B cell (primary cell): ENCODE measurements at regions of chr7 and their contacts with region 1.

Region 1: DNA sequence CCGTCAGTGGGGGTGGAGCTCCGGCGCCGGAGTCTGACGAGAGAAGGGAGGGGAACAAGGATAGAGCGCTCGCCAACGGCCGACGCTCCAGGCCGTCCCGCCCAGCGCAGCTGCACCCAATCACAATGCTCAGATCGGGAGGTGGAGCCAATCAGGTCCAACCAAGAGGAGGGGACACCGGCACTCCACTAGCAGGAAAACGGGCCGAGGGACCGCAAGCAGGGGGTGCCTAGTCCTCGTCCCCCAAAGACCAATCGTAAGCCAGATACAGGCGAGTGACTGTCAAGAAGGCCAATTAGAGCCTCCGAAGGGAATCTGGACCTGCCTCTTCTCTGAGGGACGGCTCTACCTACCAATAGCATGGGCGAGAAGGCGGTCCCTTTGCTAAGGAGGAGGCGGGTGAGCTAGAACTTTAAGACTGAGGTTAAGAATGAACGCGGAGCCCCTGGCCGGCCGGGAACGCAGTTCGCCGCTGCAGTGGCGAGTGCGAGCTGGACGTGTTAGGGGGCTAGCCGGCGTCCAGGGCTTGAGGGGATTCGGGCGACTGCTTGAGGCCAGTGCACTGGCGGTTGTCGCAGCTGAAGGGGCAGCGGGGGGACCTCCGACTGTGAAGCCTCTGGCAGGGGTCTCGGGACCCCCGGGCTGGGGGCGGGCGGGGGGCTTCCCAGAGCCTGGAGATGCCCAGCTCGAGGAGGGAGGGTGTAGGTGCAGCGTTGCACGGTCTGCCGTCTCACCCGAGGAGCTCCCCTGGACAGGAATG is at the start of gene FBXO24:
- DNase-seq: peak; percentile 100
- ATAC-seq: peak; percentile 79
- H3K4me3 ChIP-seq: peak within 1 kb of the TSS; percentile 82 to 93 (median 85)
- H3K4me3 Mint-ChIP-seq: peak within 1 kb of the TSS; percentile 98
- H3K27ac ChIP-seq: peak within 1 kb of the TSS; percentile 94 to 97
- H3K27ac Mint-ChIP-seq: peak within 1 kb of the TSS; percentile 99
- H3K4me1 ChIP-seq: peaks cover 27 to 38% of the 10 kb centered on the region in 2 donors
- H3K4me1 Mint-ChIP-seq: peaks cover 44% of the 10 kb centered on the region
- H3K27me3 ChIP-seq: peaks cover 0 to 14% (median 5%) of the 10 kb centered on the region in 4 experiments
- H3K27me3 Mint-ChIP-seq: peaks cover 9% of the 10 kb centered on the region
- CTCF ChIP-seq: no peak
- total RNA-seq, gene FBXO24: 1.6 and 2.2 TPM in 2 replicates

Region 2: DNA sequence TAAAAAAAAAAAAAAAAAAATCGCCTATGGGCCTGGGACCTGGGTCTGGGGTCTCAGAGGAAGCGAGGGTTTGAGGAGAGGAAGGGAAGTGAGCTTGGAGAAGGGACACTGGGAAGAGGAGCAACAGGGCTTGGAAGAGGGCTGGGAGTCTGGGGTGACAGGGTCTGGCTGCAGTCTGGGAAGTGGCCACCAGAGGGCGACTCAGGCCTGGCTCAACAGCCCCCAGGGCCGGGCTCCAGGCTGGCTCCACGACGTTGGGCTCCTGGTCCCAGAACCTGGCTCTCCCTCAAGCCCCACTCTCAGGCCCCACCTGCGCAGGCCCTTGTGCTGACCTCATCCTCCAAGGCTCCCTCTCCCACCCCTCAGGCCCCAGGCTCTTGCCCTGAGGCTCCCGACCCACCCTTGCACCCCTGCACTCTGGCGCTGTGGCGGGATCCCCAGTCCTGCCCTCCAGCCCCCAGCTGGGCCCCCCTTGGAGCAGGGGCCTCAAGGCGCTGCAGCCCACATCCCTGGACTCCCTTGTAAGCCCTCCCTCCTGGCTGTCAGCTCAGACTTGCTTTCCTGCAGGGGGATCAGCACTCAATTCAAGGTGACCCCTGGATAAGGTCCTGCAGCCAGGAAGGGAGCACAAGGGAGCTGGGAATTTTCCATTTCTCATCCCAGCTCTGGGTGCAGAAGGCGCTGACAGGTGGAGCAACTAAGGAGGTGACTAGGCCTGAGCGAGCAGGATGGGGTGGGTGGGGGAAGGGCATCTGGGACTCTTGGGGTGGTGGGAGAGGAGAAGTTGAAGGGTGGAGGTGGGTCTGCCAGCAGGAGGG is 117.0 kb before region 1 on chr7:
- CTCF ChIA-PET with region 1: interaction called, 13 read pairs
- POLR2A ChIA-PET with region 1: no interaction called
- intact Hi-C with region 1: no loop called
- DNase-seq: peak; percentile 84
- ATAC-seq: peak; percentile 90
- H3K4me3 ChIP-seq: no peak overlapping the region
- H3K4me3 Mint-ChIP-seq: no peak overlapping the region
- H3K27ac ChIP-seq: no peak overlapping the region
- H3K27ac Mint-ChIP-seq: peak overlapping the region; percentile 53
- H3K4me1 ChIP-seq: peaks cover 9 to 21% of the 10 kb centered on the region in 2 donors
- H3K4me1 Mint-ChIP-seq: peaks cover 24% of the 10 kb centered on the region
- H3K27me3 ChIP-seq: no peaks in the 10 kb centered on the region
- H3K27me3 Mint-ChIP-seq: no peaks in the 10 kb centered on the region
- CTCF ChIP-seq: peak; percentile 87

Region 3: DNA sequence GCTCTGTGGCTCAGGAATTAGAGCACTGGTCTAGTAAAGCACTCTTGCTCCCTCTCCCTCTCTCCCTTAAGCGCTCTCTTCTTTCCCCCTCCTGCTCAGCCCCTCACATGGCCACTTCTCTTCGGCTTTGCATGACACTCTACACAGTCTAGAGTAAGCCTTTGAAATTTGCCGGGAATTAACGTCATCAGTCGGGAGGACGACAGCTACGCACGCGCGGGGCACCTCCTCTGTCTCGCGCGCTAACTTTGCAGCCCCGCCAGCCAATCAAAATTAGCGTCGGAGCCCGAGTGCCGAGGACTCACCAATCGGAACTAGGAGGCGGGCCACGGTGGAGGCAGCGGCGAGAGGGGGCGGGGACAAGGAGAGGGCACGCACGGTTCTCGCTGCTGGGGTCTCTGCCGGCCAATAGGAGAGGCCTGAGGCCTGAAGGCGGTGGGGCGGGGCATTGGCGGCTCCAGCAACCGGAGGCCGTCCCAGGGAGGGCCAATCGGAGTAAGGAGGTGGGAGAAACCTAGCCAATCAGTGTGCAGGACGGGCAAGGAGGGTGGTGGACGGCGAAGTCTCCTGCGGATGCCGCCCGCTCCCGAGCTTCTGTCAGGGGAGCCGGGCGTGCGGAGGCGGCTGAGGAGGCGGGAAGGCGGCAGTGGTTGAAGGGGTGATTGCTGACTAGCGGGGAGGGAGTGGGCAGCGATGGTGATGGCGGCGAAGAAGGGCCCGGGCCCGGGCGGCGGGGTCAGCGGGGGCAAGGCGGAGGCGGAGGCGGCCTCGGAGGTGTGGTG is 47.6 kb before region 1 on chr7 and contains the start of gene AGFG2:
- CTCF ChIA-PET with region 1: interaction called, 5 read pairs
- POLR2A ChIA-PET with region 1: interaction called, 9 read pairs
- intact Hi-C with region 1: loop called (anchors 1 kb)
- DNase-seq: peak; percentile 100
- ATAC-seq: peak; percentile 97
- H3K4me3 ChIP-seq: peak within 1 kb of the TSS; percentile 62 to 84 (median 72)
- H3K4me3 Mint-ChIP-seq: peak within 1 kb of the TSS; percentile 91
- H3K27ac ChIP-seq: peak within 1 kb of the TSS in 1 of 2 donors; percentile 42
- H3K27ac Mint-ChIP-seq: peak within 1 kb of the TSS; percentile 76
- H3K4me1 ChIP-seq: peaks cover 14 to 23% of the 10 kb centered on the region in 2 donors
- H3K4me1 Mint-ChIP-seq: peaks cover 36% of the 10 kb centered on the region
- H3K27me3 ChIP-seq: no peaks in the 10 kb centered on the region
- H3K27me3 Mint-ChIP-seq: no peaks in the 10 kb centered on the region
- CTCF ChIP-seq: no peak
- total RNA-seq, gene AGFG2: 11.0 and 11.6 TPM in 2 replicates

Region 4: DNA sequence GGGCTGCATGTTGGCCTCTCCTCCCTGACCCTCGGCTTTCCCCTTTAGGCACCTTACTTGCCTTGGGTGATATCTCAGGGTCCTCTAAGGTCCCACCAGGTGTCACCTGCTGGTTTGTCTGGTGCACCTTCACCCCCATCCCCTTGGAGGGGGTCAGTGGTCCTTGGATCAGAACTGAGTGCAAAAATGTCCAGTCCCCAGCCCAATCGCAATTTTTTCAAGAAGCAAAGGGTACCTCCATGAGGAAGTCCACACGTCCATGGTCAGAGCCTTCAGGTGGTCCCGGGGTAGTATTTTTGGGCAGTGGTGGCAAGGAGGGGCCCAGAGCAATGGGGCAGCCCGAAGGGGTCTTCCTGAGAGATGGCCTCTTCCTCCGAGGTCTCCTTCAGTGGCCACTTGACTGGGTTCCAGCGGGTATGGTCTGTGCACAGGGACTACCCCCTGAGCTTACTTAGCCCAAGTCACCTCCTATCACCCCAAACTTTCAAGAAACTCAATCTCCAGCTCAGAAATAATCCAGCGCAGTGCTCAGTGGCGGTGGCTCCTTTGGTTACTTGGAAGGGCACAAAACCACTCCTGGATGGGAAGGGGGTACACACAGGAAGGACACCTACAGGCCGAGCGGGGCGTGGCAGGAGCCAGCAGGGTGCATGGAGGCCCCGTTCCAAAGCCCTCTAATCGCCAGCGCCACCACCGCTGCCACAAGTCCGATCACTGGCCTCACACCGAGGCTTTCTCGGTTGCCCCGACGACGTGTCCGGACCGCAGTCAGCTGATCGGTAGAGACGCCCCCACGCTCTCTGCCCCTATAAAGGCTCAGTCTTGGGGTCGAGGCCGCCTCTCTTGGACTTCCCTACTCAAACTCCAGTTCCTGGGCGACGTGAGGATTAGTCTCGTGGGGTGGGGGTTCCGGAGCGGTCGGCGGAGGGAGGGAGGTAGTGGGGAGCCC is 17.3 kb before region 1 on chr7:
- CTCF ChIA-PET with region 1: interaction called, 226 read pairs
- POLR2A ChIA-PET with region 1: interaction called, 10 read pairs
- intact Hi-C with region 1: loop called (anchors 1 kb)
- DNase-seq: peak; percentile 61
- ATAC-seq: peak; percentile 40
- H3K4me3 ChIP-seq: peak overlapping the region in 4 of 5 experiments; percentile 29 to 48 (median 38)
- H3K4me3 Mint-ChIP-seq: peak overlapping the region; percentile 67
- H3K27ac ChIP-seq: no peak overlapping the region
- H3K27ac Mint-ChIP-seq: peak overlapping the region; percentile 60
- H3K4me1 ChIP-seq: peaks cover 39 to 50% of the 10 kb centered on the region in 2 donors
- H3K4me1 Mint-ChIP-seq: peaks cover 39% of the 10 kb centered on the region
- H3K27me3 ChIP-seq: no peaks in the 10 kb centered on the region
- H3K27me3 Mint-ChIP-seq: no peaks in the 10 kb centered on the region
- CTCF ChIP-seq: peak; percentile 51

Region 5: GRCh38 chr7:100611974-100612729 is 25.7 kb after region 1 on chr7 and contains the start of gene MOSPD3:
- CTCF ChIA-PET with region 1: interaction called, 10 read pairs
- POLR2A ChIA-PET with region 1: interaction called, 26 read pairs
- intact Hi-C with region 1: loop called (anchors 1 kb)
- DNase-seq: peak; percentile 99
- ATAC-seq: peak; percentile 91
- H3K4me3 ChIP-seq: peak within 1 kb of the TSS; percentile 53 to 93 (median 84)
- H3K4me3 Mint-ChIP-seq: peak within 1 kb of the TSS; percentile 93
- H3K27ac ChIP-seq: peak within 1 kb of the TSS; percentile 82
- H3K27ac Mint-ChIP-seq: peak within 1 kb of the TSS; percentile 99
- H3K4me1 ChIP-seq: peaks cover 13 to 19% of the 10 kb centered on the region in 2 donors
- H3K4me1 Mint-ChIP-seq: peaks cover 18% of the 10 kb centered on the region
- H3K27me3 ChIP-seq: no peaks in the 10 kb centered on the region
- H3K27me3 Mint-ChIP-seq: no peaks in the 10 kb centered on the region
- CTCF ChIP-seq: no peak
- total RNA-seq, gene MOSPD3: 17.3 and 18.8 TPM in 2 replicates

Region 6: GRCh38 chr7:100673300-100673941 is 87.0 kb after region 1 on chr7 and contains the start of gene GNB2:
- CTCF ChIA-PET with region 1: interaction called, 4 read pairs
- POLR2A ChIA-PET with region 1: interaction called, 16 read pairs
- intact Hi-C with region 1: loop called (anchors 1 kb)
- DNase-seq: peak; percentile 99
- ATAC-seq: peak; percentile 65
- H3K4me3 ChIP-seq: peak within 1 kb of the TSS; percentile 53 to 99 (median 98)
- H3K4me3 Mint-ChIP-seq: peak within 1 kb of the TSS; percentile 96
- H3K27ac ChIP-seq: peak within 1 kb of the TSS; percentile 89 to 97
- H3K27ac Mint-ChIP-seq: peak within 1 kb of the TSS; percentile 97
- H3K4me1 ChIP-seq: peaks cover 0 to 6% of the 10 kb centered on the region in 2 donors
- H3K4me1 Mint-ChIP-seq: peaks cover 8% of the 10 kb centered on the region
- H3K27me3 ChIP-seq: no peaks in the 10 kb centered on the region
- H3K27me3 Mint-ChIP-seq: no peaks in the 10 kb centered on the region
- CTCF ChIP-seq: no peak
- total RNA-seq, gene GNB2: 127 TPM in 2 replicates